ENCODE measurements at regions of chr9 and their contacts with region 1.

Region 1: DNA sequence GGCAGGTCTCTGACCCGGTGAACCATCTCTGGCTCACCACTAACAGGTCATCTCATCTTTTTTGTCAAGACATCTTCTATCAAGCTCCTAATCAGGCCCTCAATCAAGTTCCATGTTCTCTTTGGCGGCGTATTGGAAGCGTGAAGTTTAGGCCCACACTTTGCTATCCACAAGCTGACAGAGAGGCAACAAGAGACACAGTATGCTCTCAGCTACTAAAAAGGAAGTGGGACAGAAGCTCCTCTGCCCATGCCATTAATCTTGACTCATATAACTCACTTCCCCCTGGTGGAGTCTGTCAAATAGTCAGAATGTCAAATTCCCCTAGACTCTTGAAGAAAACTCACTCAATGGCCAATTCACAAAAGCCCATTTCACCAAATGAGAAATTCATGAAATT is 77.6 kb upstream of the TMC1 start:
- DNase-seq: no peak
- ATAC-seq: no peak
- H3K4me3 ChIP-seq: no peak overlapping the region
- H3K27ac ChIP-seq: peak overlapping the region; percentile 26; the same call in 1 of the 2 replicates
- H3K4me1 ChIP-seq: peaks cover 18% of the 10 kb centered on the region
- H3K27me3 ChIP-seq: no peaks in the 10 kb centered on the region
- CTCF ChIP-seq: no peak
- POLR2A ChIP-seq: no peak
- RAD21 ChIP-seq: no peak

Region 2: DNA sequence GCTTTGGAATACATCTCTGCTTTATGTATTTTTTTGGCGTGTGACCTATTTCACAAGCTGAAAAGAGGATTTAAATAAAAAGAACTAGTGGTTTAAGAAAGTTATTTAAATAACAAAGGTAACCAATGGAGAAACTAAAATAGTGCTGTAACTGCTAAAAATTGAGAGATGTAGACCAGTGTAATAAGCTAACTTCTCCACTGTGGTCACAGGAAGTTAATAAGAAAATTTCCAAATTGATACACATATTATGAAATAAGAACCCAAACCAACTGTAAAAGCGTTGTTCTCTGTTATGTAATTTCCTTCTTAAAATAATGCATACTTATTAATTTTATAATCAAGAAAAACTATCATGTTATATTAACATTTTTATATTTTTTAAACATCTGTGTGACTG is 49.8 kb before region 1 on chr9:
- CTCF ChIA-PET with region 1: interaction called, 3 read pairs
- POLR2A ChIA-PET with region 1: interaction called, 7 read pairs
- dilution Hi-C with region 1: no loop called
- in situ Hi-C with region 1: loop called (anchors 5 kb)
- intact Hi-C with region 1: no loop called
- DNase-seq: no peak
- ATAC-seq: no peak
- H3K4me3 ChIP-seq: no peak overlapping the region
- H3K27ac ChIP-seq: no peak overlapping the region
- H3K4me1 ChIP-seq: peaks cover 4% of the 10 kb centered on the region
- H3K27me3 ChIP-seq: no peaks in the 10 kb centered on the region
- CTCF ChIP-seq: no peak
- POLR2A ChIP-seq: no peak
- RAD21 ChIP-seq: no peak

Region 3: DNA sequence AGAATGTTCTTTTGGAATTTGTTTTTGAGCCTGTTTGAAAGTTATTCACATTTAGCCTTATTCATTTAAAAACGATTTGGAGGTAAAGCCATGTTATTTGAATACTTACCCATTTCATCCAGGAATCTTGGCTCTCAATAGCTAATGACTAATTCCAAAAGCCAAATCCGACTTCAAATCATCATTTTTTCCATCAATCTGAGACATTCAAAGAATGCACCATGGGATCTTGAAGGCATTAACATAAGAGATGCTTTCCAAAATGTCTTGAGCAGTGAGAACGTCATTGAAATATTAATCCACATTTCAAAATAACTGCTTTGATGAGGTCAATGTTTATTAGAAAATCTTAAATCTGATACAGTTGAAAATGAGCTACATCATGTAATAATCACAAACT is 1436.2 kb after region 1 on chr9:
- CTCF ChIA-PET with region 1: no interaction called
- POLR2A ChIA-PET with region 1: no interaction called
- dilution Hi-C with region 1: no loop called
- in situ Hi-C with region 1: no loop called
- intact Hi-C with region 1: no loop called
- DNase-seq: no peak
- ATAC-seq: no peak
- H3K4me3 ChIP-seq: no peak overlapping the region
- H3K27ac ChIP-seq: no peak overlapping the region
- H3K4me1 ChIP-seq: no peaks in the 10 kb centered on the region
- H3K27me3 ChIP-seq: no peaks in the 10 kb centered on the region
- CTCF ChIP-seq: no peak
- POLR2A ChIP-seq: no peak
- RAD21 ChIP-seq: no peak